Ascending aorta (tissue), 2 donors: ENCODE measurements at regions of chr16 and their contacts with region 1.

Region 1: GRCh38 chr16:72093448-72094265 is at the starts of genes DHX38 and TXNL4B:
- DNase-seq: peak; percentile 88 to 97
- H3K4me3 ChIP-seq: peak within 1 kb of the TSS; percentile 75 to 87
- H3K27ac ChIP-seq: peak within 1 kb of the TSS; percentile 84 to 92
- H3K4me1 ChIP-seq: peaks cover 12 to 25% of the 10 kb centered on the region in 2 donors
- H3K27me3 ChIP-seq: no peaks in the 10 kb centered on the region
- CTCF ChIP-seq: no peak
- total RNA-seq, gene DHX38: 11.7 TPM
- total RNA-seq, gene TXNL4B: 2.4 TPM

Region 2: GRCh38 chr16:71484006-71484893 is 609.4 kb before region 1 on chr16:
- intact Hi-C with region 1: loop called (anchors 1 kb)
- DNase-seq: peak; percentile 33 to 92
- H3K4me3 ChIP-seq: peak overlapping the region; percentile 80 to 82
- H3K27ac ChIP-seq: peak overlapping the region; percentile 90 to 95
- H3K4me1 ChIP-seq: peaks cover 0 to 6% of the 10 kb centered on the region in 2 donors
- H3K27me3 ChIP-seq: no peaks in the 10 kb centered on the region
- CTCF ChIP-seq: no peak

Region 3: GRCh38 chr16:71564155-71564967 is 529.3 kb before region 1 on chr16:
- intact Hi-C with region 1: loop called (anchors 5 kb)
- DNase-seq: no peak
- H3K4me3 ChIP-seq: peak overlapping the region; percentile 69 to 89
- H3K27ac ChIP-seq: peak overlapping the region in 1 of 2 donors; percentile 65
- H3K4me1 ChIP-seq: peaks cover 0 to 4% of the 10 kb centered on the region in 2 donors
- H3K27me3 ChIP-seq: no peaks in the 10 kb centered on the region
- CTCF ChIP-seq: no peak

Region 4: DNA sequence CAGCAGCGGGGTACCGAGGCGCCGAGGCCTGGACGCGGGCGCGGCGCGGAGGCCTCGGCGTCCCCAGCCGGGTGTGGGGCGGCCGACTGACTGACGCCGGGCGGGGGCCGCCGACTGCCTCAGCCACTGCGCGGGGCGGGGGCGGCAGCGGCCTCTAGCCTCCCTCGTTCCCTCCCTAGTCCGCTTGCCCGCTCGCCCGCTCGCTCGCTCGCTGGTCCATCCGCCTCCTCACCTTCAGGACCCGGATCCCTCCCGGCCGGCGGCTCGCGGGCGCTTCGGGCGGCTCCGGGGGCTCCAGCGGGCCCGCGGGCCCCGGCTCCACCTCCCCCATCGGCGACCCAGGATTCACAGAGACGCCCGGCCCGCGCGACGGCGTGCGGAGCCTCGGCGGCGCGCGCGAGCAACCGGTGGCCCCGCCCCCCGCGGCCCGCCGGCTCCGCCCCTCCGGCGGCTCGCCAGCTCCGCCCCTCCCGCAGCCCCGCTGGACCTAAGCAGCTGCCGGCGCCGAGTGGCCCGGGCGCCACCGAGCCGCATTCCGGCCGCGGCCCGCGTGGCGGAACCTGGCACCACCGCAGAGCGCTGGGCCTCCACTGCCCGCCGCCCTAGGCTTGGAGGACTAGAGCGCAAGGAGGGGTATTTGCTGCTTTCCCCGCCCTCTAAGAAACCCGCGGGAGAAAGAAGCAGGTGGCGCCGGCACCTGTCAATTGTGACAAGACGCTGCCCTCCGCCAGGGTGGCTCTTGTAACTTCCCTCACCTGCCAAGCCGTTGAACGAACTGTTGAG is 369.9 kb before region 1 on chr16:
- intact Hi-C with region 1: loop called (anchors 10 kb)
- DNase-seq: peak; percentile 14 to 84
- H3K4me3 ChIP-seq: peak overlapping the region; percentile 87 to 94
- H3K27ac ChIP-seq: peak overlapping the region; percentile 93 to 97
- H3K4me1 ChIP-seq: peaks cover 0 to 17% of the 10 kb centered on the region in 2 donors
- H3K27me3 ChIP-seq: no peaks in the 10 kb centered on the region
- CTCF ChIP-seq: no peak

Region 5: GRCh38 chr16:72008424-72009216 is 85.0 kb before region 1 on chr16 and contains the start of gene DHODH:
- intact Hi-C with region 1: loop called (anchors 1 kb)
- DNase-seq: peak; percentile 95 to 99
- H3K4me3 ChIP-seq: peak within 1 kb of the TSS; percentile 80 to 94
- H3K27ac ChIP-seq: peak within 1 kb of the TSS; percentile 42 to 48
- H3K4me1 ChIP-seq: peaks cover 0 to 2% of the 10 kb centered on the region in 2 donors
- H3K27me3 ChIP-seq: no peaks in the 10 kb centered on the region
- CTCF ChIP-seq: peak in 2 of 3 experiments; percentile 6 to 15
- total RNA-seq, gene DHODH: 8.6 TPM

Region 6: GRCh38 chr16:72107371-72107770 is 13.7 kb after region 1 on chr16:
- intact Hi-C with region 1: no loop called
- DNase-seq: no peak
- H3K4me3 ChIP-seq: no peak overlapping the region
- H3K27ac ChIP-seq: no peak overlapping the region
- H3K4me1 ChIP-seq: no peaks in the 10 kb centered on the region
- H3K27me3 ChIP-seq: no peaks in the 10 kb centered on the region
- CTCF ChIP-seq: no peak